PC-9 (cell line): ENCODE measurements at regions of chr1 and their contacts with region 1.

Region 1: GRCh38 chr1:71400050-71400449 is 319.2 kb upstream of the ZRANB2 start:
- DNase-seq: no peak
- H3K4me3 ChIP-seq: no peak overlapping the region
- H3K27ac ChIP-seq: no peak overlapping the region
- H3K4me1 ChIP-seq: no peaks in the 10 kb centered on the region
- H3K27me3 ChIP-seq: no peaks in the 10 kb centered on the region
- CTCF ChIP-seq: no peak

Region 2: DNA sequence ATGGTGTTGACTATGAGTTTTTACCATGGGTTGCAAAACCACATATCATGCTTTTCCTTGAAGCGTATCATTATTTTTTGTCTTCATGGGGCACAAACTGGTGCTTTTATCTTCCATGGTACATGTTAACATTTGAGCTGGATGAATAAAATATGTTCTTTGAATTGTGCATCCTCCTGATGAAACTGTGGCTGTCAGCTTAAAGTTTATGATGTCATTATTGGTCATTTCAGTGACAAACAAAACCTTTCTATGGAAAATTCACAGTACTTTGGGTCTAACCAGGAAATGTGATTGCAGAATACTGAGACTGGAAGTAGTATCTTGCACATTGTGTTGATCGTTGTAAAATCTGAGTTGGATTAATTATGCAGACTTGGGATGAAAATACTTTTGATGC is 27.6 kb before region 1 on chr1:
- CTCF ChIA-PET with region 1: no interaction called
- POLR2A ChIA-PET with region 1: no interaction called
- intact Hi-C with region 1: loop called (anchors 1 kb)
- DNase-seq: no peak
- H3K4me3 ChIP-seq: no peak overlapping the region
- H3K27ac ChIP-seq: no peak overlapping the region
- H3K4me1 ChIP-seq: no peaks in the 10 kb centered on the region
- H3K27me3 ChIP-seq: no peaks in the 10 kb centered on the region
- CTCF ChIP-seq: no peak

Region 3: GRCh38 chr1:72851597-72851996 is 1451.5 kb after region 1 on chr1:
- CTCF ChIA-PET with region 1: no interaction called
- POLR2A ChIA-PET with region 1: no interaction called
- intact Hi-C with region 1: no loop called
- DNase-seq: no peak
- H3K4me3 ChIP-seq: no peak overlapping the region
- H3K27ac ChIP-seq: no peak overlapping the region
- H3K4me1 ChIP-seq: no peaks in the 10 kb centered on the region
- H3K27me3 ChIP-seq: no peaks in the 10 kb centered on the region
- CTCF ChIP-seq: no peak